HEK293 (cell line): ENCODE measurements at regions of chr1 and their contacts with region 1.

Region 1: DNA sequence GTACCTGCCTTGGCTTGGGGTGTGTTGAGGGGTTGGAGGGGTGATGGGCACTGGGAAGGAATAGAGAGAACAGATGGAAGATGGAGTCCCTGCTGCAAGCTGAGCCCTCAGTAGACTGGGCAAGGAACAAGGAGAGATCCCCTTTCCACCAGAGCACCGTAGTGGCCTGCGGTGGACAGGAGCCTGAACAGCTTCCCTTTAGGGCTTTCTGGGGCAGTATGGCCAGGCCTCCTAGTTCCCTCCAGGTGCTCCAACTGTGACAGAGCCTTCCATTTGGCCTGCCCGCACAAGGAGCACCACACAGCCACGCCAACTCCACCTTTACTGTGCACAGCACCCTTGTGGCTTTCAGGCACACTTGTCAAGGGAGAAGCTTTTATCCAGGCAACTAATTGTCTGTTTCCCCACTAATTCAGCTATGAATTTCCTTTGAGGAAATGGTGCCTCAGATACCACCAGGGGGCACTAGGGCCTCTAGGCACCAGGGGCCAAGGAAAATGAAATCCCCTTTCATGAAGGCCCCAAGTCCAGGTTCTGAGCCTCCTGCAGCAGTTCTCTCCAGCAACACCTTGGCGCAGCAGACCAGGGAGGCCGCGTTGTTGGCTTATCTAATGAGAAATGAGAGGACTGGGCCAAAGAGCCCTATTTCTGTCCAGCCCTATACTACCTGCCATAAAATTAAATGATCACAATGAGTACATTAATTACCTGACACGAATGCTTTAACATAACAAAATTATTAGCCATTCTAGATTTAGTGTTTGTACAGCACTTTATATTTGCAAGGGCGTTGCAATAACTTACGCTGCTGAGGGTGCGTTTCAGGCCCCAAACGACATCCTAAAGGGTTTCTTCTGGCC is 23.1 kb upstream of the ERI3 start:
- H3K4me3 ChIP-seq: no peak overlapping the region
- H3K27ac ChIP-seq: no peak overlapping the region
- H3K4me1 ChIP-seq: no peaks in the 10 kb centered on the region
- CTCF ChIP-seq: peak; percentile 54

Region 2: DNA sequence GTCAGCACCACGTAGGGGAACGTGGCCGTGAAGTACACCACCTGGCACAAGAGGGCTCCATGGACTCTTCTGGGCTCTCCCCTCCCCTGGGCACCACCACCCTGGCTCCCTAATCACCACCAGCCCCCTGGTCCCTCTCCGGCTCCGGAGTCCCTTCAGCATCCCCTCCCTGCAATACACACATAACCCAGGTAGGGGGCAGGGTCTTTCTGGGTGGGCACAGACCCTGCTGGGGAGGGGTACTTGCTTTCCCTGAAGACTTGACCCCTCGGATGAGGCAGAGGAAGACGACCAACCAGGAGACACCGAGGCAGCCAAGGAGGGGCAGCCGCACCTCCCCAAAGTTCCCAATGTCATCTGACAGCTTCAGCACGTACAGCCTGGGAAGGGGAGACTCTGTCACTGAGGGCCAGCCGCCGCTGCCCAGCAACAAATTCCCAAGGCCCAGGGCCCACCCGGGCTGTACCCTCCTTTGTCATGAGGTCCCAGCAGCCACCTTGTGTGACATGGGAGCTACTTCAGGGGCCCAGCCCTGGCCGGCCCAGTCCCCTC is 375.5 kb before region 1 on chr1:
- CTCF ChIA-PET with region 1: no interaction called
- POLR2A ChIA-PET with region 1: no interaction called
- H3K4me3 ChIP-seq: no peak overlapping the region
- H3K27ac ChIP-seq: no peak overlapping the region
- H3K4me1 ChIP-seq: no peaks in the 10 kb centered on the region
- CTCF ChIP-seq: no peak

Region 3: DNA sequence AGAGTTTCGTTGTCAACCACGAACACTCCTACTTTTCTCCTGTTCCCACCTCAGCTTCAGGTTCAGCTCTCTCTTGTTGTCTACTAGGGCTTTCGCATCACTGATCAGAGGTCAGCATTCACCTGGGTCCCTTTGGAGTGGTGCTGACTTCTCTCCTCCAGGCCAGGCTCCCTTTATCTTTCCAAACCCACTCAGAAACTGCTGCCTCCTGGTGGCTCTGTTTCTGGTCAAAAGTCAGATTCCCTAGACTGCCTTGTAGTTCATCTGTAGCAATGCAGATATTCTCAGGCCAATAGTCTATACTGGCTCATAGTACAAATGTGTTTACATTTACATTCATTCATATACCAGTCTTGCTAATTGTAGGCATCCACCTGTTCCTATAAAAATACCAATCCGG is 16.7 kb before region 1 on chr1:
- CTCF ChIA-PET with region 1: interaction called, 12 read pairs
- POLR2A ChIA-PET with region 1: no interaction called
- H3K4me3 ChIP-seq: no peak overlapping the region
- H3K27ac ChIP-seq: no peak overlapping the region
- H3K4me1 ChIP-seq: peaks cover 2% of the 10 kb centered on the region; the same call in 1 of the 2 replicates
- CTCF ChIP-seq: no peak; the same call in 1 of the 2 replicates

Region 4: GRCh38 chr1:44390277-44390676 is 12.1 kb after region 1 on chr1:
- CTCF ChIA-PET with region 1: interaction called, 13 read pairs
- POLR2A ChIA-PET with region 1: no interaction called
- H3K4me3 ChIP-seq: no peak overlapping the region
- H3K27ac ChIP-seq: no peak overlapping the region
- H3K4me1 ChIP-seq: no peaks in the 10 kb centered on the region
- CTCF ChIP-seq: no peak